ENCODE measurements at regions of chr15 and their contacts with region 1.

Region 1: DNA sequence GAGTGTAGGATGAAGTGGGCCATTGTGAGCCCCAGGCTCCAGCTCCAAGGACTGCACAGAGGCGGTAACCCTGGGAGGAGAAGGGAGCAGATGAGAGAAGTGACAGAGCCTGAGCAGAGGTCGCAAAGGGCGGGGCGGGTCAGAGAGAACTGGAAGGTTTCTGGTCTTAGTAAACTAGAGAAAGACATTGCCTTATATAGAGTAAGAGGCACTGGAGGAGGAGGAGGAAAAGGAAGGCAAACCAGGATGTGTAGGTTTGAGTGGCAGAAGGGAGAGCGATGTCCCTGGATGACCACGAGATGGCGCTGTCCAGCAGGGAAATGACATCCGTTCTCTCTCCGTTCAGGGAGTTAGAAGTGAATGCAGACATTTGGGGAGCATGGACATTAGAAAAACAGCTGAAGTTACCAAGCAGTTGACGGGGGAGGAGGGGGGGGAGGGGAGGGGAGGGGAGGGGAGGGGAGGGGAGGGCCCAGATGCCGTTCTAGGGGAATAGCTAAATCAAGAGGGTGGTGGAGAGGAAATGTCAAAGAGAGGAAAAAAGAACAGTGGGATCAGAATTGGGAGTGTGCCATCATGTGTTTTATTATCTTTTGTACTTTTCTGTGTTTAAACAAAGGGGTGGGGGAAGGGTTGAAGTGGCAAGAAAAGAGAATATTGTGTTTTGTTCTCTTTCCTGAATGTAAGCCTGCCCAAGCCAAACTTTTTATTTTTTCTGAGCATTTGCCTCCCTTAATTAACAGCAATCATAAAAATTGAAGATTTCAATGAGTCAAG is 48.8 kb downstream of the STARD5 start:
- DNase-seq: peak; percentile 88
- ATAC-seq: peak; percentile 90
- H3K4me3 Mint-ChIP-seq: peak overlapping the region; percentile 33
- H3K27ac Mint-ChIP-seq: peak overlapping the region; percentile 53
- H3K4me1 Mint-ChIP-seq: peaks cover 46% of the 10 kb centered on the region
- H3K27me3 Mint-ChIP-seq: no peaks in the 10 kb centered on the region

Region 2: GRCh38 chr15:81163961-81164800 is 110.9 kb before region 1 on chr15:
- CTCF ChIA-PET with region 1: no interaction called
- POLR2A ChIA-PET with region 1: no interaction called
- intact Hi-C with region 1: no loop called
- DNase-seq: no peak
- ATAC-seq: no peak
- H3K4me3 Mint-ChIP-seq: no peak overlapping the region
- H3K27ac Mint-ChIP-seq: no peak overlapping the region
- H3K4me1 Mint-ChIP-seq: peaks cover 19% of the 10 kb centered on the region
- H3K27me3 Mint-ChIP-seq: peaks cover 9% of the 10 kb centered on the region

Region 3: DNA sequence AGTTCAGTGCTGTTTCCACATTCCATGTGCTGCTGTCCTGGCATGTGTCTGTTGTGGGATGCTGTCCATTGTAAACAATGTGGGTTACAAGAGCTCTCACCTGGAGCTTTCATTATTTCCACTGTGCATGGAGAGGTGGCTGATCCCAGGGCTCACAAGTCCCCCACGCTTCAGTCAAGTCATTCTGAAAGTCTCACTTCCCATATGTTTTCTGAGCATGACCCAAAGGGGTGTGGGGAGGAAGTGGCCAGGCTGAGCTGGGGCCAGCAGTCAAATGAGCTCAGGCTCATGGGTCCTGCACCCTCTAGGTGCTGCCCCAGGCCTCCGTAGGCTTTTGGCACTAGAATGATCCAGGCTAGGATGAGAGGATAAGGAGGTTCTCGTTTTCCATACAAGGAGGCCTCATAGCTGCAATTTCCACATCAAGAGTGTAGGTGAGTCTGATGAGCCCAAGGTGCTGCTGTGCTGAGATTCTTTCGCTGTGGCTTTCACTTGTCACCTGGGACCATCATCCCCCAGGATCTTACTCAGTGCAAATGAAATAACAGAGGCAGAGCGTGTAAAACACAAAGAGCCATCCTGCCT is 26.8 kb after region 1 on chr15:
- CTCF ChIA-PET with region 1: interaction called, 18 read pairs
- POLR2A ChIA-PET with region 1: no interaction called
- intact Hi-C with region 1: loop called in 1 of 2 experiments (anchors 2 kb)
- DNase-seq: peak; percentile 67
- ATAC-seq: peak; percentile 45
- H3K4me3 Mint-ChIP-seq: peak overlapping the region; percentile 94
- H3K27ac Mint-ChIP-seq: peak overlapping the region; percentile 98
- H3K4me1 Mint-ChIP-seq: peaks cover 66% of the 10 kb centered on the region
- H3K27me3 Mint-ChIP-seq: no peaks in the 10 kb centered on the region

Region 4: DNA sequence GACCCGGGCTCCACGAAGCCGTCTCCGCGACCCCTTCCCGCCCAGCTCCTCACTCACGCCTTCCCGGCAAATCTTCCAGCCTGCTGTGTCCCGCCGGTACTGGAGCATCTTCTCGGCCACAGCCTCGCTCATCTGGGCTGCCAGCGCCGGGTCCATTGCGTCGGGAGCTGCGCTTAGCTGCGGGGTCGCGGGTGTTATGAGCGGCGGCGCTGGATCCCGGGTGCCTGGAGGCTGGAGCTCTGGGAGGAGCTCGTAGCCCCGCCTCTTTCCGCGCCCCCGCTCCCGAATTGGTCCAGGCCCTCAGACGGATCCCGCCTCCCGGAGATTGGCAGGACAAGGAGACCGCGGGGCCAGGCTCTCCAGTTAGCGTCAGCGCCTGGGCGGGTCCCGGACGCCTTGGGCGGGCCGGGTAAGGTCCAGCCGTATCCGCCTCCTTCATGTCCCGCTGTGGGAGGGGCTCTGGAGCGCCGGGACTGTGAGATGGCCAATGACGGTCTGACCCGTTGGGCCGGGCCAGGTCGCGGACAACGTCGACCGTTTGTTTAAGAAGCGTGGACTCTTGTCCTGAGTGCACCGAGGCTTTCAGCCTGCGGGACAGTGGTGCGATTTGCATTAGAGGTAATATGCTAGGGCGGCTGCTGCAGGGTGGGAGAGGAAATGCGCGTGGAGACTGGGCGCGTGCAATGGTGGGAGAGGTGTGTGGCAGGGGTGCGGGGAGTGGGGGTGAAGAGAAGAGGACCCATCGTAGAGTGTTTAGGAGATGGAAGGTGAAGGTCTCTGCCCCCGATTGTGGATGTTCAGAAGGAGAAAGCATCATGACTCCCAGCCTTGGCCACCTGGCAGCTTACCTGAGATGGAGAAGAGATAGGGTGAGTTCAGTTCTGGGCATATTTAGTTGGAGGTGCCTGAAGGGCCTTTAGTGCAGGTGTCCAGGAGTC is 49.1 kb after region 1 on chr15 and contains the start of gene STARD5:
- CTCF ChIA-PET with region 1: interaction called, 18 read pairs
- POLR2A ChIA-PET with region 1: no interaction called
- intact Hi-C with region 1: loop called in 1 of 2 experiments (anchors 2 kb)
- DNase-seq: peak; percentile 98
- ATAC-seq: peak; percentile 99
- H3K4me3 Mint-ChIP-seq: peak within 1 kb of the TSS; percentile 95
- H3K27ac Mint-ChIP-seq: peak within 1 kb of the TSS; percentile 90
- H3K4me1 Mint-ChIP-seq: peaks cover 27% of the 10 kb centered on the region
- H3K27me3 Mint-ChIP-seq: no peaks in the 10 kb centered on the region
- total RNA-seq, gene STARD5: 8.9 to 9.2 TPM

Region 5: GRCh38 chr15:81379269-81379668 is 104.2 kb after region 1 on chr15:
- CTCF ChIA-PET with region 1: interaction called, 15 read pairs
- POLR2A ChIA-PET with region 1: no interaction called
- intact Hi-C with region 1: no loop called
- DNase-seq: no peak
- ATAC-seq: no peak
- H3K4me3 Mint-ChIP-seq: no peak overlapping the region
- H3K27ac Mint-ChIP-seq: no peak overlapping the region
- H3K4me1 Mint-ChIP-seq: peaks cover 4% of the 10 kb centered on the region
- H3K27me3 Mint-ChIP-seq: no peaks in the 10 kb centered on the region

Region 6: GRCh38 chr15:81410318-81410753 is 135.2 kb after region 1 on chr15:
- CTCF ChIA-PET with region 1: interaction called, 10 read pairs
- POLR2A ChIA-PET with region 1: no interaction called
- intact Hi-C with region 1: no loop called
- DNase-seq: peak; percentile 24
- ATAC-seq: peak; percentile 69
- H3K4me3 Mint-ChIP-seq: no peak overlapping the region
- H3K27ac Mint-ChIP-seq: no peak overlapping the region
- H3K4me1 Mint-ChIP-seq: peaks cover 14% of the 10 kb centered on the region
- H3K27me3 Mint-ChIP-seq: no peaks in the 10 kb centered on the region

Region 7: GRCh38 chr15:81504170-81504905 is 229.2 kb after region 1 on chr15:
- CTCF ChIA-PET with region 1: no interaction called
- POLR2A ChIA-PET with region 1: no interaction called
- intact Hi-C with region 1: no loop called
- DNase-seq: no peak
- ATAC-seq: no peak
- H3K4me3 Mint-ChIP-seq: no peak overlapping the region
- H3K27ac Mint-ChIP-seq: no peak overlapping the region
- H3K4me1 Mint-ChIP-seq: no peaks in the 10 kb centered on the region
- H3K27me3 Mint-ChIP-seq: no peaks in the 10 kb centered on the region